Activated B cell treated with CpG ODN at 0.5 μM for 24 hours (primary cell): ENCODE measurements at regions of chr11 and their contacts with region 1.

Region 1: GRCh38 chr11:8682303-8683114 is at the starts of genes RPL27A and TRIM66:
- DNase-seq: peak; percentile 99
- ATAC-seq: peak; percentile 94
- H3K4me3 Mint-ChIP-seq: peak within 1 kb of the TSS; percentile 94
- H3K27ac Mint-ChIP-seq: peak within 1 kb of the TSS; percentile 96
- H3K4me1 Mint-ChIP-seq: peaks cover 45% of the 10 kb centered on the region
- H3K27me3 Mint-ChIP-seq: no peaks in the 10 kb centered on the region
- CTCF ChIP-seq: no peak
- total RNA-seq, gene RPL27A: 1,592 and 2,225 TPM in 2 replicates
- total RNA-seq, gene TRIM66: 12.4 and 13.3 TPM in 2 replicates

Region 2: GRCh38 chr11:7986768-7987559 is 695.5 kb before region 1 on chr11 and contains the start of gene EIF3F:
- CTCF ChIA-PET with region 1: no interaction called
- POLR2A ChIA-PET with region 1: interaction called, 4 read pairs
- intact Hi-C with region 1: loop called (anchors 1 kb)
- DNase-seq: peak; percentile 73
- ATAC-seq: peak; percentile 97
- H3K4me3 Mint-ChIP-seq: peak within 1 kb of the TSS; percentile 93
- H3K27ac Mint-ChIP-seq: peak within 1 kb of the TSS; percentile 94
- H3K4me1 Mint-ChIP-seq: peaks cover 40% of the 10 kb centered on the region
- H3K27me3 Mint-ChIP-seq: no peaks in the 10 kb centered on the region
- CTCF ChIP-seq: peak; percentile 56
- total RNA-seq, gene EIF3F: 367 and 396 TPM in 2 replicates

Region 3: GRCh38 chr11:8442301-8442700 is 240.2 kb before region 1 on chr11:
- CTCF ChIA-PET with region 1: no interaction called
- POLR2A ChIA-PET with region 1: no interaction called
- intact Hi-C with region 1: no loop called
- DNase-seq: no peak
- ATAC-seq: no peak
- H3K4me3 Mint-ChIP-seq: no peak overlapping the region
- H3K27ac Mint-ChIP-seq: no peak overlapping the region
- H3K4me1 Mint-ChIP-seq: no peaks in the 10 kb centered on the region
- H3K27me3 Mint-ChIP-seq: no peaks in the 10 kb centered on the region
- CTCF ChIP-seq: no peak

Region 4: GRCh38 chr11:8593935-8594909 is 88.3 kb before region 1 on chr11 and contains the start of gene STK33:
- CTCF ChIA-PET with region 1: no interaction called
- POLR2A ChIA-PET with region 1: interaction called, 13 read pairs
- intact Hi-C with region 1: loop called (anchors 10 kb)
- DNase-seq: peak; percentile 52
- ATAC-seq: peak; percentile 92
- H3K4me3 Mint-ChIP-seq: peak within 1 kb of the TSS; percentile 88
- H3K27ac Mint-ChIP-seq: peak within 1 kb of the TSS; percentile 50
- H3K4me1 Mint-ChIP-seq: peaks cover 17% of the 10 kb centered on the region
- H3K27me3 Mint-ChIP-seq: peaks cover 11% of the 10 kb centered on the region
- CTCF ChIP-seq: no peak
- total RNA-seq, gene STK33: 11.4 and 14.0 TPM in 2 replicates

Region 5: GRCh38 chr11:8813658-8814057 is 131.1 kb after region 1 on chr11:
- CTCF ChIA-PET with region 1: no interaction called
- POLR2A ChIA-PET with region 1: interaction called, 11 read pairs
- intact Hi-C with region 1: loop called (anchors 1 kb)
- DNase-seq: peak; percentile 29
- ATAC-seq: peak; percentile 77
- H3K4me3 Mint-ChIP-seq: no peak overlapping the region
- H3K27ac Mint-ChIP-seq: no peak overlapping the region
- H3K4me1 Mint-ChIP-seq: peaks cover 10% of the 10 kb centered on the region
- H3K27me3 Mint-ChIP-seq: peaks cover 10% of the 10 kb centered on the region
- CTCF ChIP-seq: peak; percentile 23

Region 6: GRCh38 chr11:8911029-8911826 is 228.7 kb after region 1 on chr11 and contains the start of gene AKIP1:
- CTCF ChIA-PET with region 1: no interaction called
- POLR2A ChIA-PET with region 1: interaction called, 5 read pairs
- intact Hi-C with region 1: loop called (anchors 1 kb)
- DNase-seq: peak; percentile 70
- ATAC-seq: peak; percentile 77
- H3K4me3 Mint-ChIP-seq: peak within 1 kb of the TSS; percentile 89
- H3K27ac Mint-ChIP-seq: peak within 1 kb of the TSS; percentile 59
- H3K4me1 Mint-ChIP-seq: peaks cover 37% of the 10 kb centered on the region
- H3K27me3 Mint-ChIP-seq: no peaks in the 10 kb centered on the region
- CTCF ChIP-seq: no peak
- total RNA-seq, gene AKIP1: 7.1 and 9.0 TPM in 2 replicates

Region 7: GRCh38 chr11:9130297-9130696 is 447.8 kb after region 1 on chr11:
- CTCF ChIA-PET with region 1: no interaction called
- POLR2A ChIA-PET with region 1: no interaction called
- intact Hi-C with region 1: no loop called
- DNase-seq: no peak
- ATAC-seq: no peak
- H3K4me3 Mint-ChIP-seq: no peak overlapping the region
- H3K27ac Mint-ChIP-seq: no peak overlapping the region
- H3K4me1 Mint-ChIP-seq: no peaks in the 10 kb centered on the region
- H3K27me3 Mint-ChIP-seq: no peaks in the 10 kb centered on the region
- CTCF ChIP-seq: no peak